ENCODE measurements at regions of chr14 and their contacts with region 1.

Region 1: GRCh38 chr14:39169541-39169900 is 612 bp downstream of the TRAPPC6B start:
- DNase-seq: no peak
- H3K4me3 ChIP-seq: peak overlapping the region; percentile 86 to 99
- H3K4me3 Mint-ChIP-seq: peak overlapping the region; percentile 88 to 100 (median 96)
- H3K27ac ChIP-seq: peak overlapping the region; percentile 94
- H3K27ac Mint-ChIP-seq: peak overlapping the region; percentile 93 to 100 (median 99)
- H3K4me1 ChIP-seq: peaks cover 40% of the 10 kb centered on the region
- H3K4me1 Mint-ChIP-seq: peaks cover 35 to 59% (median 48%) of the 10 kb centered on the region in 4 donors
- H3K27me3 ChIP-seq: no peaks in the 10 kb centered on the region
- H3K27me3 Mint-ChIP-seq: no peaks in the 10 kb centered on the region

Region 2: GRCh38 chr14:39102969-39103957 is 66.3 kb before region 1 on chr14 and contains the start of gene SEC23A:
- CTCF ChIA-PET with region 1: interaction called, 3 read pairs
- POLR2A ChIA-PET with region 1: interaction called, 26 read pairs
- intact Hi-C with region 1: loop called (anchors 1 kb)
- DNase-seq: peak; percentile 80 to 88 (median 82)
- H3K4me3 ChIP-seq: peak within 1 kb of the TSS; percentile 77 to 89
- H3K4me3 Mint-ChIP-seq: peak within 1 kb of the TSS; percentile 93 to 98 (median 96)
- H3K27ac ChIP-seq: peak within 1 kb of the TSS; percentile 86
- H3K27ac Mint-ChIP-seq: peak within 1 kb of the TSS; percentile 91 to 99 (median 98)
- H3K4me1 ChIP-seq: peaks cover 50% of the 10 kb centered on the region
- H3K4me1 Mint-ChIP-seq: peaks cover 21 to 64% (median 40%) of the 10 kb centered on the region in 4 donors
- H3K27me3 ChIP-seq: no peaks in the 10 kb centered on the region
- H3K27me3 Mint-ChIP-seq: no peaks in the 10 kb centered on the region
- total RNA-seq, gene SEC23A: 61.1 to 70.3 TPM

Region 3: DNA sequence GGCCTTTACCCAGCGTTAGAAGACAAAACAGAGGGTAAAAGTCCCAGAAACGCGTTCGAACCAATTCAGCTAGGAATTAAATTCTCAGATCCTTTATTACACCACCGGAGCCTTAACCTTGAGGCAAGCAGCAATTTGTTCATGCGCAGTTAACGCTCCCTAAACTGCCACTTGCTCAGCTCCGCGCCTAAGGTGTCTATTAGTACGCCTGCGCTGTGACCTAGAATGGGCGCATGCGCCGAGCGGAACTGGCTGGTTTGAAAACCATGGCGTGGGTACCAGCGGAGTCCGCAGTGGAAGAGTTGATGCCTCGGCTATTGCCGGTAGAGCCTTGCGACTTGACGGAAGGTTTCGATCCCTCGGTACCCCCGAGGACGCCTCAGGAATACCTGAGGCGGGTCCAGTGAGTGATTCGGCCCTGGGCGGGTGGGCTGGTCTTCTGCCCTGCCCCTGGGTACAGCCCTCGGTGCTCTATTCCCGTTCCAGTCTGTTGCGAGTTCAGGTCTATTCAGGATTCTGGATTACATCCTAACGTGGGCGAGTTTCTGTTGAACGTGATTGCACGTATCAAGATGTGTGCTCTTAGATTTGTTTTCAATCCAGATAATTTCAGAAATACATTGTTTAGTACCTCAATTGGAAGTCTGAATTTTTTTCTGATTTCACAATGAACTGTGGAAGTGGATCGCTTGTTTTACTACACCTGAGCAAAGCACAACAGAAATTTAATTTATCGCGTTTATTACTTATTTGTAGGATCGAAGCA is 55.3 kb before region 1 on chr14 and contains the start of gene GEMIN2:
- CTCF ChIA-PET with region 1: interaction called, 7 read pairs
- POLR2A ChIA-PET with region 1: interaction called, 38 read pairs
- intact Hi-C with region 1: loop called (anchors 1 kb)
- DNase-seq: peak; percentile 92 to 95 (median 94)
- H3K4me3 ChIP-seq: peak within 1 kb of the TSS; percentile 66 to 81
- H3K4me3 Mint-ChIP-seq: peak within 1 kb of the TSS; percentile 92 to 99 (median 97)
- H3K27ac ChIP-seq: peak within 1 kb of the TSS; percentile 80
- H3K27ac Mint-ChIP-seq: peak within 1 kb of the TSS; percentile 93 to 99 (median 97)
- H3K4me1 ChIP-seq: peaks cover 13% of the 10 kb centered on the region
- H3K4me1 Mint-ChIP-seq: peaks cover 12 to 25% (median 17%) of the 10 kb centered on the region in 4 donors
- H3K27me3 ChIP-seq: no peaks in the 10 kb centered on the region
- H3K27me3 Mint-ChIP-seq: peaks cover 2 to 6% of the 10 kb centered on the region in 2 donors
- total RNA-seq, gene GEMIN2: 13.4 to 16.9 TPM

Region 4: DNA sequence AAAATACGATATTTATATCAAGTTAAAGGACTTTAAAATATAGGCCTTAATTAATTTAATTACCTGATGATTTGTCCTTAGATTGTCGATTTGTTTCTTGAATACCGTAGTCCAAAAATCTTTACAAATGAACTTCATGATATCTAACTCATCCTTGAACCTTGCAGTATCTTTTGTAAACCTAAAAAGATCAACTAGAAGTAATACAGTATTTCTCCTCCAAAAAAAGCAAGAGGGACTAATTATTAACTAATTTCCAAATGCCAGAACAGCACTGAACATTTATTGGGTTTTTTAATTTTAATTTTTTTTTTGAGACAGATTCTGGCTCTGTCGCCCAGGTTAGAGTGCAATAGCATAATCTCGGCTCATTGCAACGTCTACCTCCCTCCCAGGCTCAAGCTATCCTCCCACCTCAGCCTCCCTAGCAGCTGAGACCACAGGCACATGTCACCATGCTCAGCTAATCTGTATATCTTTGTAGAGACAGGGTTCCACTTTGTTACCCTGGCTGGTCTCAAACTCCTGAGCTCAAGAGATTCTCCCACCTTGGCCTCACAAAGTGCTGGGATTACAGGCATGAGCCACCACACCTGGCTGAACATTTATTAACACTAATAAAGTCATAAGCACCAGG is 11.2 kb before region 1 on chr14:
- CTCF ChIA-PET with region 1: interaction called, 5 read pairs
- POLR2A ChIA-PET with region 1: interaction called, 13 read pairs
- intact Hi-C with region 1: no loop called
- DNase-seq: no peak
- H3K4me3 ChIP-seq: no peak overlapping the region
- H3K4me3 Mint-ChIP-seq: no peak overlapping the region
- H3K27ac ChIP-seq: no peak overlapping the region
- H3K27ac Mint-ChIP-seq: no peak overlapping the region
- H3K4me1 ChIP-seq: peaks cover 15% of the 10 kb centered on the region
- H3K4me1 Mint-ChIP-seq: peaks cover 11 to 25% (median 16%) of the 10 kb centered on the region in 4 donors
- H3K27me3 ChIP-seq: no peaks in the 10 kb centered on the region
- H3K27me3 Mint-ChIP-seq: no peaks in the 10 kb centered on the region

Region 5: DNA sequence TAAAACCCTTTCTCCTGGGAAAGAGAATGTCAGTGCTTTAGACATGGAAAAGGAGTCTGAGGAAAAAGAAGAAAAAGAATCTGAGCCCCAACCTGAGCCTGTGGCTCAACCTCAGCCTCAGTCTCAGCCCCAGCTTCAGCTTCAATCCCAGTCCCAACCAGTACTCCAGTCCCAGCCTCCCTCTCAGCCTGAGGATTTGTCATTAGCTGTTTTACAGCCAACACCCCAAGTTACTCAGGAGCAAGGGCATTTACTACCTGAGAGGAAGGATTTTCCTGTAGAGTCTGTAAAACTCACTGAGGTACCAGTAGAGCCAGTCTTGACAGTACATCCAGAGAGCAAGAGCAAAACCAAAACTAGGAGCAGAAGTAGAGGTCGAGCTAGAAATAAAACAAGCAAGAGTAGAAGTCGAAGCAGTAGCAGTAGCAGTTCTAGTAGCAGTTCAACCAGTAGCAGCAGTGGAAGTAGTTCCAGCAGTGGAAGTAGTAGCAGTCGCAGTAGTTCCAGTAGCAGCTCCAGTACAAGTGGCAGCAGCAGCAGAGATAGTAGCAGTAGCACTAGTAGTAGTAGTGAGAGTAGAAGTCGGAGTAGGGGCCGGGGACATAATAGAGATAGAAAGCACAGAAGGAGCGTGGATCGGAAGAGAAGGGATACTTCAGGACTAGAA is 11.6 kb after region 1 on chr14:
- CTCF ChIA-PET with region 1: interaction called, 4 read pairs
- POLR2A ChIA-PET with region 1: interaction called, 14 read pairs
- intact Hi-C with region 1: no loop called
- DNase-seq: no peak
- H3K4me3 ChIP-seq: no peak overlapping the region
- H3K4me3 Mint-ChIP-seq: no peak overlapping the region
- H3K27ac ChIP-seq: no peak overlapping the region
- H3K27ac Mint-ChIP-seq: no peak overlapping the region
- H3K4me1 ChIP-seq: peaks cover 28% of the 10 kb centered on the region
- H3K4me1 Mint-ChIP-seq: peaks cover 6 to 26% (median 19%) of the 10 kb centered on the region in 4 donors
- H3K27me3 ChIP-seq: no peaks in the 10 kb centered on the region
- H3K27me3 Mint-ChIP-seq: no peaks in the 10 kb centered on the region

Region 6: DNA sequence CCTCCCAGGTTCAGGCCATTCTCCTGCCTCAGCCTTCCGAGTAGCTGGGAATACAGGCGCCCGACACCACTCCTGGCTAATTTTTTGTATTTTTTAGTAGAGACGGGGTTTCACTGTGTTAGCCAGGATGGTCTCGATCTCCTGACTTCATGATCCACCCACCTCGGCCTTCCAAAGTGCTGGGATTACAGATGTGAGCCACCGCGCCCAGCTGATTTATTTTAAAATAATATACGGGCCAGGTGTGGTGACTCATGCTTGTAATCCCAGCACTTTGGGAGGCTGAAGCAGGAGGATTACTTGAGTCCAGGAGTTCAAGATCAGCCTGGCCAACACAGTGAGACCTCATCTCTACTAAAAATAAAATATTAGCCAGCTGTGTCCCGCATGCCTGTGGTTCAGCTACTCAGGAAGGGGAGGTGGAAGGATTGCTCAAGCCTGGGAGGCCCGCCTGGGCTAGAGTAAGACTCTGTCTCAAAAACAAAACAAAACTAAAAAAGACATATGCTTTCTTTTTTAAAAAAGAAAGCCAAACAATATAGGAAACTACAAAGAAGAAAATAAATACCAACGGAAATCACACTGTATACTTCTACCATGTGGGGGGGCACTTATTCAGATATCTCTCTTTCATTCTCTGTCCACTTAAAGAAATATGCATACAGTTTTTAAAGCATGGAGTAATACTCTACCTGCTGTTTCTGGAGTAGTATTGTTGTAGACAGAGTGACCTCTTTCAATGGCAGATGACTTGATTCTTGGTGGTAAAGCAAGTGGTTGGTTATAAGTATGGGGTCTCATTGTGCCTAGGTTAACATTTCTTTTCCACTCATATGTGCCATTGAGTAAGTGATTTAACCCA is 63.3 kb after region 1 on chr14:
- CTCF ChIA-PET with region 1: interaction called, 3 read pairs
- POLR2A ChIA-PET with region 1: interaction called, 17 read pairs
- intact Hi-C with region 1: no loop called
- DNase-seq: peak in 2 of 5 donors; percentile 4 to 10
- H3K4me3 ChIP-seq: no peak overlapping the region
- H3K4me3 Mint-ChIP-seq: peak overlapping the region in 3 of 8 donors; percentile 40 to 60 (median 43)
- H3K27ac ChIP-seq: no peak overlapping the region
- H3K27ac Mint-ChIP-seq: peak overlapping the region in 5 of 7 donors; percentile 28 to 75 (median 63)
- H3K4me1 ChIP-seq: peaks cover 35% of the 10 kb centered on the region
- H3K4me1 Mint-ChIP-seq: peaks cover 24 to 37% (median 31%) of the 10 kb centered on the region in 4 donors
- H3K27me3 ChIP-seq: no peaks in the 10 kb centered on the region
- H3K27me3 Mint-ChIP-seq: no peaks in the 10 kb centered on the region